Activated T-helper 1 cell treated with anti-CD3 and anti-CD28 coated beads, Interleukin-12 subunit alpha, Interleukin-12 subunit beta, Interleukin-2, Interleukin-4 antibody, amounts not matched to agents 30 ng/mL and 10 ng/mL and 1 ng/mL, durations not matched to agents 14 hours and 24 hours and 36 hours (primary cell): ENCODE measurements at regions of chr19 and their contacts with region 1.

Region 1: DNA sequence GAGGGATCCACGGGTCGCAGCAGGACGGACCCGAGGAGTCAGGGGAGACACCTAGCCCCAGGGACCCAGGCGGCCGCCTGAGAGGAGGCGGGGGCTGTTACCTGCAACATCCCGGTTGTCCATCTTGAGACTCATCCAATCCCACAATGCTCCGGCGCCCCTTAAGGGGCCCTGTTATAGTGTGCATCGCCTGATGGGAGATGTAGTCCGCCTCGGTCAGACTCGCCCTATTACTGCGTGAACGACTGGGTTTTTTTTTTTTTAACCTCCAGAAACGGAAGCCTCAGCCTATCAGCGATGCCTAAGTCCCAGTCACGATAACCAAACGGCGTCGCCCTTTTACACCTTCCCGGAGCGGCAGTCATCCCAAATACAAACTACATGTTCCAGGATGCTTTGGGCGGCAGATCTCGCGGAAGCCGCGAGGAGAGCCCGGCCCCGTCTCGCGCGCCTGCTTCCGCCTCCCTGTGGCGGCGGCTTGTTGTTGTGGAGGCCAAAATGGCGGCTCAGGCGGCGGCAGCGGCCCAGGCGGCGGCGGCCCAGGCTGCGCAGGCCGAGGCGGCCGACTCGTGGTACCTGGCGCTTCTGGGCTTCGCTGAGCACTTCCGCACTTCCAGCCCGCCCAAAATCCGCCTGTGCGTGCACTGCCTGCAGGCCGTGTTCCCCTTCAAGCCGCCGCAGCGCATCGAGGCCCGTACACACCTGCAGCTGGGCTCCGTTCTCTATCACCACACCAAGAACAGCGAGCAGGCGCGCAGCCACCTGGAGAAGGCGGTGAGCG is at the starts of genes MAU2 and SUGP1:
- DNase-seq: peak; percentile 89
- H3K4me3 Mint-ChIP-seq: peak within 1 kb of the TSS; percentile 94
- H3K27ac Mint-ChIP-seq: peak within 1 kb of the TSS; percentile 98
- H3K4me1 Mint-ChIP-seq: peaks cover 20% of the 10 kb centered on the region
- H3K27me3 Mint-ChIP-seq: no peaks in the 10 kb centered on the region
- total RNA-seq, gene MAU2: 71.4 and 73.4 TPM in 2 replicates
- total RNA-seq, gene SUGP1: 76.3 and 79.8 TPM in 2 replicates

Region 2: DNA sequence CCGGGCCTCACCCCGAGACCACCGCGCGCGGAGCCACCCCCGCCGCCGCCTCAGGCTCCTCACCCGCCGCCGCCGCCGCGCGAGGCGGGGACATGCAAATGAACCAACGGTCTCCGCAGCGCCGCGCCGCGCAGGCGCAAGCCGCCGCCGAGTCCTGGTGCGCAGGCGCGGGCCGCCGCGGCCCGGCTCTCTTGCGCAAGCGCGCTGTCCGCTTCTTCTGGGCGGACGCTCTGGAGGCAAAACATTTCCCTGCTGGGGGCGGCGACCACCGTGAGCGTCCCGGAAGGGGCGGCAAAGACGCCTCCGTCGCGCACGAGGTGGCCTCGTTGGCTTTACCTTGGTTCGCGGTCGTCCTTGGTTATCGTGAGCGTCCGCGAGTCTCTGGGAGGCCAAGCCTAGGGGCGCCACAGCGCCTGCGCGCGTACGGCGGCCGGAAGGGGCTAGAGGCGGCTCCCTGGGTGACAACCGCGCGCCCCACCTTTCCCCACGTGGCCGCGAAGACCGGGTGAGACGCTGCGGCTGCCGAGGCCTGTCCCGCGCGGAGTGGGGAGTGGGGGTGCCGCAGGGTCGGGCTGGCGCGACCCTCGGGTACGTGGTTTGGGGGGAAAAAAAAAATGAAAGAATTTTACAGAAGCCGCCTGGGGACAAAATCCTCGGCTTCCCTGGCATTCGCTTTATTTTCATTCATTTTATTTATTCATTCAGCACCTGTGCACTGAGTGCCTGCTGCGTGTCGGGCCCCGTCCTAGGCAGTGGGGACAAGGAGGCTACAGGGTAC is 286.9 kb before region 1 on chr19 and contains the starts of genes ARMC6 and SUGP2:
- intact Hi-C with region 1: loop called (anchors 1 kb)
- DNase-seq: peak; percentile 89
- H3K4me3 Mint-ChIP-seq: peak within 1 kb of the TSS; percentile 98
- H3K27ac Mint-ChIP-seq: peak within 1 kb of the TSS; percentile 98
- H3K4me1 Mint-ChIP-seq: peaks cover 25% of the 10 kb centered on the region
- H3K27me3 Mint-ChIP-seq: no peaks in the 10 kb centered on the region
- total RNA-seq, gene ARMC6: 54.9 and 56.5 TPM in 2 replicates
- total RNA-seq, gene SUGP2: 114 and 128 TPM in 2 replicates

Region 3: DNA sequence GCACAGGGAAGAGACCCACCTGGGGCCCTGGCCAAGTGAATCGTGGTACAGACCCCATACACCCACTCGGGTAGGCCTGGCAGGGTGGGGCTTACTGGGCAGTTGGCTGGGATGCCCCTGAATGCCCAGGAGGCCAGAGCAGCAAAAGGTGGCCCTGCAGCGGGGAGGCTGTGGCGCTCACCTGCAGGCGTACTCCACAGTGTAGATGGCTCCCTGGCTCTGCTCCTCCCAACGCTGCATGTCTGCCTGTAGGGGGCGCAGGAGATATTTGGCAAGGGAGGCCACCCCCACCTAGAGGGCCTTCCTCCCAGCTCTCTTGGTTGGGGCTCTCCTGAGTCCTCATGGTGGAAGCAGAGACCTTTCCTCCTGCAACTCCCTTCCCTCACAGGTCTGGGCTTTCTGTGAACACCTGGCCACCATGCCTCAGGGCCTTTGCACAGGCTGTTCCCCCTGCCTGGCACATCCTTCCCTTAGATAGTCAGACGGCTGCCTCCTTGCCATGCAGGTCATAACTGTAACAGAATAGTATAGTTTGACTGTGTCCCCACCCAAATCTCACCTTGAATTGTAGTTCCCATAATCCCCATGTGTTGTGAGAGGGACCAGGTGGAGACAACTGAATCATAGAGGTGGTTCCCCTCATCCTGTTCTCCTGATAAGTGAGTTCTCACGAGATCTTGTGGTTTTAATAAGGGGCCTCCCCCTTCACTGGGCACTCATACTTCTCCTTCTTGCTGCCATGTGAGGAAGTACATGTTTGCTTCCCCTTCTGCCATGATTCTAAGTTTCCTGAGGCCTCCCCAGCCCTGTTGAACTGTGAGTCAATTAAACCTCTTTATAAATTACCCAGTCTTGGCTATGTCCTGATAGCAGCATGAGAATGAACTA is 134.5 kb before region 1 on chr19:
- intact Hi-C with region 1: loop called (anchors 1 kb)
- DNase-seq: peak; percentile 32
- H3K4me3 Mint-ChIP-seq: no peak overlapping the region
- H3K27ac Mint-ChIP-seq: no peak overlapping the region
- H3K4me1 Mint-ChIP-seq: peaks cover 6% of the 10 kb centered on the region
- H3K27me3 Mint-ChIP-seq: no peaks in the 10 kb centered on the region

Region 4: GRCh38 chr19:19203012-19203856 is 117.3 kb before region 1 on chr19 and contains the start of gene NR2C2AP:
- intact Hi-C with region 1: loop called (anchors 1 kb)
- DNase-seq: peak; percentile 90
- H3K4me3 Mint-ChIP-seq: peak within 1 kb of the TSS; percentile 95
- H3K27ac Mint-ChIP-seq: peak within 1 kb of the TSS; percentile 89
- H3K4me1 Mint-ChIP-seq: peaks cover 20% of the 10 kb centered on the region
- H3K27me3 Mint-ChIP-seq: peaks cover 2% of the 10 kb centered on the region
- total RNA-seq, gene NR2C2AP: 50.9 and 52.0 TPM in 2 replicates

Region 5: GRCh38 chr19:19304186-19304965 is 16.2 kb before region 1 on chr19:
- intact Hi-C with region 1: no loop called
- DNase-seq: no peak
- H3K4me3 Mint-ChIP-seq: no peak overlapping the region
- H3K27ac Mint-ChIP-seq: peak overlapping the region; percentile 7
- H3K4me1 Mint-ChIP-seq: no peaks in the 10 kb centered on the region
- H3K27me3 Mint-ChIP-seq: no peaks in the 10 kb centered on the region

Region 6: DNA sequence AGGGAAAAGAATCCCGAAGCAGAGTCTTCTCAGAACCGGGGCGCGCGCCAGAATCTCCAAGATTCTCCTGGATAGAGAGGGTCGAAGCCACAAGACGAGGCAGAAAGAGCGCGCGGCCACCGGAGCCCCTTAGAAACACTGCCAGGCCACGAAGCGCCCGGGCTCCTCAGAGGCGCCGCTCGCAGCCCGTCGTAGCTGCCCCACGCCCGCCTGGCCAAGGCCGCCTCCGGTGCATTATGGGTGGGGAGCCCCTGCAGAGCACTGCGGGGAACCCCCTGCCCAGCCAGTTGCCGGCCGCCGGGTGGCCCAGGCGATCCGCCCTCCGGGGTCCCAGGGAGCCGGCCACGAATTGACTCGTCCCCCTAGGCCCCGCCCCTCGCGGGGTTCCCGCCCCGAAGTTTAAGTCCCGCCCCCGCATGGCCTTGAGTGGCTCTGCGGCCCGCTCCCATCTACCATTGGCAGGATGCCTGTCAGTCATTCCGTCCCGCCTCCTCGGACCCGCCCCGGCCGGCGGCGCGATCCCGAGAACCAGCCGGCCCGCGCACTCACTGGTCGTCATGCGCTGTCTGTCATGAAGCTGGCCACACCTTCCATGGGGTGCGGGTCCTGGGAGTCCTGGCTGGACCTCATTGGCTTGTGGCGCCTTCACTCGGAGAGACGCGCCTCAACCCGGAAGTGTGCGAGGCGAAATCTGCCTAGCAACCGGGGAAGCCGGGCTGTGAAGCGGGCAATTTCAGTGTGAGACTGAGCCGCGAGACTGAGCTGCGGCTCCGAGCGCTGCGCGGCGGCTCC is 64.8 kb after region 1 on chr19:
- intact Hi-C with region 1: loop called (anchors 1 kb)
- DNase-seq: peak; percentile 100
- H3K4me3 Mint-ChIP-seq: peak overlapping the region; percentile 87
- H3K27ac Mint-ChIP-seq: peak overlapping the region; percentile 92
- H3K4me1 Mint-ChIP-seq: peaks cover 45% of the 10 kb centered on the region
- H3K27me3 Mint-ChIP-seq: peaks cover 2% of the 10 kb centered on the region

Region 7: DNA sequence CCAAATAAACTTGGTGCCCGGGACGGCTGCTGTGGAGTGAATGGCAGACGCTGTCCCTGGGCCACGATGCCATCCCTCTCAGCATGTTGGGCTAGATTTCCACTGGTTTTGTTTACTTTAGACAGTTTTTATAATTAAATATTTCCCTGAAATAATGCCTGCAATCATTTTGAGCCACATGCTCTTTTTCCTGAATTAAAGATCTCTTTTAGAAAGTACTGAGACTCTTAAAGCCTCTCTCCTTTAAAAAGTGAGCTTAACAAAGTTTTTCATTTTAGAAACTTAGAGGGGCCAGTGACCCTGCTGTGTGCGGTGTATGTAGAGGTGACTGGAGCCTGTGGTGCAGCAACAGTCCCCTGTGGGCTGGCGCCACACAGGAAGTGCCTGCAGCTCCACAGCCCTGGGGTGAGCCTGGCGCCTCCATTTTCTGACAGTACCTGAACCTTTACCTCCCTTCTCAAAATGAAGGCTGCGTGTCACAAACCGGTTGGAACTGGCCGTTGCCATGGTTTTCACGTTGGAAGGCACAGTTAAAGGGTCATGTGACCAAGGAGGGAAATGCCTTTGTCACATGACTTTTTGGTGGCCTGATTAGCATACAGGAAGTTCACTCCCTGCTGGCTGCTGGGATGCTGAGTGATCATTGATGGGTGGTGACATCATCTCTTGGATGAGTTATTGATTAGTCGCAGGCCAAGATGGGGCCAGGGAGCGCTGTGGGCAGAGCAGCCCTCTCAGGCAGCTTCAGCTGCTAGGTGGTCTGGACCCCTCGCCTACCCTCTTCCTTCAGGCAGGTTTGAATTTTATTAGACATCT is 168.5 kb after region 1 on chr19:
- intact Hi-C with region 1: loop called (anchors 1 kb)
- DNase-seq: peak; percentile 91
- H3K4me3 Mint-ChIP-seq: peak overlapping the region; percentile 72
- H3K27ac Mint-ChIP-seq: peak overlapping the region; percentile 99
- H3K4me1 Mint-ChIP-seq: peaks cover 34% of the 10 kb centered on the region
- H3K27me3 Mint-ChIP-seq: no peaks in the 10 kb centered on the region